ENCODE measurements at regions of chr3 and their contacts with region 1.

Region 1: GRCh38 chr3:84825817-84826216 is 133.0 kb upstream of the CADM2 start:
- DNase-seq: peak; percentile 19
- ATAC-seq: peak; percentile 48; the same call in 1 of the 2 replicates
- H3K4me3 Mint-ChIP-seq: no peak overlapping the region
- H3K27ac Mint-ChIP-seq: no peak overlapping the region
- H3K4me1 Mint-ChIP-seq: peaks cover 10% of the 10 kb centered on the region; the same call in 1 of the 2 replicates
- H3K27me3 Mint-ChIP-seq: no peaks in the 10 kb centered on the region
- CTCF ChIP-seq: no peak

Region 2: GRCh38 chr3:84547971-84548970 is 277.5 kb before region 1 on chr3:
- CTCF ChIA-PET with region 1: interaction called, 13 read pairs
- POLR2A ChIA-PET with region 1: no interaction called
- DNase-seq: peak; percentile 77
- ATAC-seq: peak; percentile 86
- H3K4me3 Mint-ChIP-seq: peak overlapping the region; percentile 33; the same call in 1 of the 2 replicates
- H3K27ac Mint-ChIP-seq: peak overlapping the region; percentile 45; the same call in 1 of the 2 replicates
- H3K4me1 Mint-ChIP-seq: peaks cover 19% of the 10 kb centered on the region
- H3K27me3 Mint-ChIP-seq: no peaks in the 10 kb centered on the region; the same call in 1 of the 2 replicates
- CTCF ChIP-seq: peak; percentile 54